ENCODE measurements at regions of chr9 and their contacts with region 1.

Region 1: DNA sequence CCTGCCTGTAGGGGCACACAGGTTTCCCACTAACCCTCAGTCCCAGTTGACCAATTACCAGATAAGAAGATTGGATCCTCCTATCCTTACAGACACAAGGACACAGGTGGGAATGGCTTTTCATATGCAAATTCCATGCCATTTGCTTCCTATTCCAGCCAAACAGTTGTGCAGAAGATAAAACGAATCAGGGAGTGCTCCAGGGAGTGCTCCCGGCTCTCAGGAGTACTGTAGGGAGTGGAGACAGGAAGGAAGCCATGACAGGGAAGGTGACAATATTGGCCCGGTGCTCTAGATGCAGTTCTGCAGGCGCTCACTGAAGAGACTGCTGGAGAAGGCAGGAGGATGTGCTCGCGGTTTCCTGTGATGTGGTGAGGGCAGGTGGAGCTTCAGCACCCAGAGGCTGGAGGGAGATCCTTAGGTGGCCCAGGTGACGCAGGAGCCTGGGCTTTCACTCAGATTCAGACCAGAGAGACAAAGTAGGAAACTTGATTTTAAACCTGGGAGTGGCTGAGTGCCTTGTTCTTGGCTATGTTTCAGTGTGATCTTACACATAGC is 260.0 kb downstream of the AUH start:
- DNase-seq: no peak
- H3K4me3 ChIP-seq: no peak overlapping the region
- H3K27ac ChIP-seq: no peak overlapping the region
- H3K4me1 ChIP-seq: peaks cover 2% of the 10 kb centered on the region
- H3K27me3 ChIP-seq: peaks cover 0 to 8% of the 10 kb centered on the region in 2 experiments
- CTCF ChIP-seq: no peak
- POLR2A ChIP-seq: no peak

Region 2: GRCh38 chr9:91071185-91071990 is 30.3 kb before region 1 on chr9:
- CTCF ChIA-PET with region 1: no interaction called
- POLR2A ChIA-PET with region 1: no interaction called
- dilution Hi-C with region 1: no loop called
- intact Hi-C with region 1: no loop called
- DNase-seq: peak; percentile 26
- H3K4me3 ChIP-seq: no peak overlapping the region
- H3K27ac ChIP-seq: no peak overlapping the region
- H3K4me1 ChIP-seq: no peaks in the 10 kb centered on the region
- H3K27me3 ChIP-seq: no peaks in the 10 kb centered on the region
- CTCF ChIP-seq: no peak
- POLR2A ChIP-seq: no peak

Region 3: GRCh38 chr9:91089405-91090129 is 12.1 kb before region 1 on chr9:
- CTCF ChIA-PET with region 1: interaction called, 19 read pairs
- POLR2A ChIA-PET with region 1: no interaction called
- dilution Hi-C with region 1: no loop called
- intact Hi-C with region 1: no loop called
- DNase-seq: peak; percentile 41
- H3K4me3 ChIP-seq: no peak overlapping the region
- H3K27ac ChIP-seq: no peak overlapping the region
- H3K4me1 ChIP-seq: no peaks in the 10 kb centered on the region
- H3K27me3 ChIP-seq: peaks cover 0 to 5% of the 10 kb centered on the region in 2 experiments
- CTCF ChIP-seq: peak in 1 of 2 donors; percentile 42
- POLR2A ChIP-seq: no peak

Region 4: DNA sequence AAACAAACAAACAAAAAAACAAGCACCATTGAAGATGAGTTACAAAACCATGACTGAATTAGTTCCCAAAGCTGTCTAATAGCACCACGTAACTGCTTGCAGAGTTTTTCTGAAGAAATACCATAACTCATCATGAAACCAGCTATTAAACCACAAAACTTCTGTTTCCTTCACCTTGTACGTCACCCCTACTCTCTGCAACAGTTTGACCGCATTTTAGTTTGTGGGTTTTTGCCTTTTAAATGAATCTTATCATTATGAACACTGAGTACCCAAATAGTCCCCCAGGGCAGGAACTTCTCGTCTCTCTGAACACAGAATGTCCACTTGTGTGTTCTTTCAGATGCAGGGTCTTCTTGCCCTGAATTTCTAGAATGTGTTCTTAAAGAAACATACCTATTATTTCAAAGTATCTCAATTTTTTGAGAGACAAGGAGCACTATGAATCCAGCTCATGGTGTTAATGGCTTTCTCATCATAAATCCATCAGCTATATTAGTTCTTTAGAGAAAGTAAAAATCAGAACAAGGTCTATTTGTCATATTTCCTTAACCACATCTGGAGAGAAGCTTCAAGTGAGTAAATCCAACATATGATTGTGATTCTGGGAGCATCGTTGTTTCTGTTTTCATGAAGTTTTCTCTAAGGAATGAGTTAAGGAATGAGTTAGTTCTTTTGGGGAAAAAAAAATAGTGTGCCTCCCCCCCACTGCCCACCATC is 49.5 kb after region 1 on chr9:
- CTCF ChIA-PET with region 1: no interaction called
- POLR2A ChIA-PET with region 1: no interaction called
- dilution Hi-C with region 1: no loop called
- intact Hi-C with region 1: no loop called
- DNase-seq: no peak
- H3K4me3 ChIP-seq: no peak overlapping the region
- H3K27ac ChIP-seq: no peak overlapping the region
- H3K4me1 ChIP-seq: no peaks in the 10 kb centered on the region
- H3K27me3 ChIP-seq: no peaks in the 10 kb centered on the region
- CTCF ChIP-seq: no peak
- POLR2A ChIP-seq: no peak

Measured in endothelial cell of umbilical vein (primary cell).